Mammary epithelial cell (primary cell): ENCODE measurements at regions of chr10 and their contacts with region 1.

Region 1: GRCh38 chr10:33258967-33259366 is 75.5 kb downstream of the NRP1 start:
- DNase-seq: peak; percentile 60
- H3K4me3 ChIP-seq: no peak overlapping the region
- H3K27ac ChIP-seq: no peak overlapping the region
- H3K4me1 ChIP-seq: peaks cover 31% of the 10 kb centered on the region
- H3K27me3 ChIP-seq: no peaks in the 10 kb centered on the region
- CTCF ChIP-seq: no peak

Region 2: GRCh38 chr10:33015761-33016547 is 243.0 kb before region 1 on chr10:
- CTCF ChIA-PET with region 1: no interaction called
- dilution Hi-C with region 1: no loop called
- in situ Hi-C with region 1: no loop called
- intact Hi-C with region 1: no loop called
- DNase-seq: peak; percentile 77
- H3K4me3 ChIP-seq: no peak overlapping the region
- H3K27ac ChIP-seq: no peak overlapping the region
- H3K4me1 ChIP-seq: peaks cover 3% of the 10 kb centered on the region
- H3K27me3 ChIP-seq: no peaks in the 10 kb centered on the region
- CTCF ChIP-seq: no peak

Region 3: GRCh38 chr10:33216661-33217427 is 42.1 kb before region 1 on chr10:
- CTCF ChIA-PET with region 1: no interaction called
- dilution Hi-C with region 1: no loop called
- in situ Hi-C with region 1: no loop called
- intact Hi-C with region 1: no loop called
- DNase-seq: peak; percentile 76
- H3K4me3 ChIP-seq: no peak overlapping the region
- H3K27ac ChIP-seq: peak overlapping the region; percentile 51
- H3K4me1 ChIP-seq: peaks cover 30% of the 10 kb centered on the region
- H3K27me3 ChIP-seq: no peaks in the 10 kb centered on the region
- CTCF ChIP-seq: no peak

Region 4: DNA sequence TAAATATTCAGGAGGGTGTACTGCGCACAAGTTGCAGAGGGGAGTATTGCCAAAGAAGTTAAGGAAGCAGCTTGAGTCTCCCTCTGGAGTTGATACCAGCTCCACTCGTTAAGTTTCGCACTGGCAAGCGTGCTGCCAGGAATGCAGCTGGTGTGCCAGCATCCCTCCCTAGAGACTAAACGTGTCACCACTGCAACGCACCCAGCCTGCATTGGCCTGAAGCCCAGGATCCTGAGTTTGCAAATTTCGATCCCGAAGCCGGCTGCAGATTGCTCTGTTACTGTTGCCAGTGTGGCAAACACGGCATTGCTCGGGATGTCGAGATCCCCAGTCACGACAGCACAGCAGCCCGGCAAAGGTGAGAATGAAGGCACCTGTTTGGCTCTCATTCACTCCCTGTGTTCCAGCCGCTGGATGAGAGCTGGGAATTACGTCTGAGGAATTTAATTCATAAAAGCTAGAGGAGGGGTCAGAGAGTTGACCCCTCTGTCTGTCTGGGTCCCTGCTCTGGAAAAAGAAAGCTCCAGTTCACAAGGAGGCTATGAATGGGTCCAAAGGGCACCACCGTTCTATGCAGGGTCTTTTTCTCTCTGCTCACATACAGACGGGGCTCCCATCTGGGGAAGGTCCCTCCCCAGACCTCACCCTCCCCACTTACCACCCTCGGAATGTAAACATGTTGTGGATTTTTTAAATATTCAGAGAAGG is 14.5 kb after region 1 on chr10:
- CTCF ChIA-PET with region 1: no interaction called
- dilution Hi-C with region 1: no loop called
- in situ Hi-C with region 1: no loop called
- intact Hi-C with region 1: loop called (anchors 1 kb)
- DNase-seq: peak; percentile 95
- H3K4me3 ChIP-seq: peak overlapping the region; percentile 11 to 16 (median 14)
- H3K27ac ChIP-seq: peak overlapping the region; percentile 97
- H3K4me1 ChIP-seq: peaks cover 39% of the 10 kb centered on the region
- H3K27me3 ChIP-seq: no peaks in the 10 kb centered on the region
- CTCF ChIP-seq: peak; percentile 8 to 53

Region 5: DNA sequence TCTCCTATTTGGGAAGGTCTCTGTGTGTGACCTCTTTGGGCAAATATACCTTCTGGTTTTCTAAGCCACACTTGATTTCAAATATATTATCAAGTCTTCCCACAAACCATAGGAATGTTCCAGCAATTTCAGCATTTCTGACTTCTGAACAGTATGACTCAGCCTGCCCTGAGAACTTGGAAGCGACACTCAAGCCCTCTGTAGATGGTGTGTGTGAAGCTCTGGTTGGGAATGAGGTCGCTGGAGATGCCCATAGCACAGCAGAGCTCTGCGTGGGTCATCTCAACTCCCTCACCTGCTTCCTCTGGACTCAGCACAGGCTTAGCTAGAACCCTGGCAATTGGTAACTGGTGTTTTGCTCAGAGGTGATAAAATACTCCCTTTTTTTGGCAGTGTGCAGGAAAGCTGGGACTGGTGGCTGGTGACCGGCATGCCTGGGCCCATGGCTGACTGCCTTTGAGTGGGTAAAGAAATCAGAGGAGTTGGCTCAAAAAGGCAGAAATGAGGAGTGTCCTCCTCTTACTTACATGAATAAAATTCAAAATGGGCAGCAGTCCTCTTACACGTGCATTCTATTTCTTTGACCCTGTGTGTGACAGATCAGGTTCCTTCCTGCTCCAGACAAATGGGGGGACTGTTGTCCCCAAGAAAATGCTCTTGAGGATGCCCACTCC is 163.0 kb after region 1 on chr10:
- CTCF ChIA-PET with region 1: no interaction called
- dilution Hi-C with region 1: no loop called
- in situ Hi-C with region 1: no loop called
- intact Hi-C with region 1: no loop called
- DNase-seq: peak; percentile 68
- H3K4me3 ChIP-seq: no peak overlapping the region
- H3K27ac ChIP-seq: no peak overlapping the region
- H3K4me1 ChIP-seq: peaks cover 9% of the 10 kb centered on the region
- H3K27me3 ChIP-seq: no peaks in the 10 kb centered on the region
- CTCF ChIP-seq: no peak